ENCODE measurements at regions of chr11 and their contacts with region 1.

Region 1: GRCh38 chr11:19561011-19561410 is 151.6 kb upstream of the NAV2 start:
- DNase-seq: no peak
- H3K4me3 ChIP-seq: no peak overlapping the region
- H3K27ac ChIP-seq: no peak overlapping the region
- H3K4me1 ChIP-seq: peaks cover 5% of the 10 kb centered on the region
- H3K27me3 ChIP-seq: no peaks in the 10 kb centered on the region
- CTCF ChIP-seq: no peak

Region 2: DNA sequence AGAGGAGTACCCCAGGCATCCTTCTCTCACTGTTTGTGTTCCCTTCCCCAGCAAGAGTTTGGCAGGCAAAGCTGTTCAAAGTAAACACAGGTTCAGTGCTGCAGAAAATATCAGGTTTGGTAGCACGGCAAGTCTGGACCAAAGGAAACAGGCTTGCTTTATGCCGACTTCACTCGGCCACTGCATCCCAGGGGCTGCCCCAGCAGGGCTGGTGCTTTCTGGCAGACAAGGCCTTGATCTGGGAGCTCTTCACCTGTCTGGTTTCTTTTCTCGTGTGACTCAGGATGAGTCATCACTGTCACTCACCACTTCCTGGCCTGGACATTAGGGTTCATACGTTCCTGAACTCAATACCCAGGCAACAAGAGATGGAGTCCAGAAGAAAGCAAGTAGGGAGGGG is 99.1 kb after region 1 on chr11:
- CTCF ChIA-PET with region 1: interaction called, 3 read pairs
- dilution Hi-C with region 1: no loop called
- in situ Hi-C with region 1: no loop called
- intact Hi-C with region 1: loop called (anchors 10 kb)
- DNase-seq: peak; percentile 98
- H3K4me3 ChIP-seq: no peak overlapping the region
- H3K27ac ChIP-seq: peak overlapping the region; percentile 69
- H3K4me1 ChIP-seq: peaks cover 39% of the 10 kb centered on the region
- H3K27me3 ChIP-seq: no peaks in the 10 kb centered on the region
- CTCF ChIP-seq: no peak